Calu3 (cell line): ENCODE measurements at regions of chr13 and their contacts with region 1.

Region 1: DNA sequence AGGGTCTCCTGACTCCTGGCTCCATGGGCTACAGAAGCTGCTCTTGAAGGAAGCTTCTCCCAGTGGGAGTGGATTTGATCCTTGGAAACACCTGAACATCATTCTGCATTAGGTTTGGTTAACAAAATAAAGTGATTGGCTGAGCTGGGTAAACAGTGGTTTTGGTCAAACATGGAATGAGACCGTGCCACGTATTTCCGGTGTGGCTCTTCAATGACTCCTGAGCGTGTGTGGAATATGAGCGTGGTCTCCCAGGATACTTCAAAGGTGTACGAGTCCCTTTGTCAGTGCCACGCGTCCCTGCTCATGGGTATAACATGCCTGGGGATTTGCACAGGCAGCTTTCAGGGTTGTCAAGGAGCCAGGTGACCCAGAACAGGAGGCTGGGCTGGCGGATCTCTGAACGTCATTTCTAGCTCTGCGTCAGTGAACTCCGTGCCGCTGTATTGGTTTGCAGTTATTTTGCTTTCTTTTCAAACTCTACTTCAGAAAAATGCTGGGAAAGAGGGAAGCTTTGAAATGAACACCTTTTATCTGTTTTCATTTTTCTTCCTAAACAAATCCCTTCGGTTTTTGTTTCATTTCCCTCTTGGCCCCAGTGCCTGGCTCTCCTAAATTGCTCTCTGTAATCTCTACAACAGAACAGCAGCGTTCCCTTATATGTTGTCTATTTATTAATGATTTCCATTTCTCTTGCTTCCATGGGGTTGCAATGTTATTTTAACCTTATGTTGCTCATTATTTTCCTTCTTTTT is 26.3 kb upstream of the GJB6 start:
- DNase-seq: no peak
- H3K4me3 Mint-ChIP-seq: no peak overlapping the region
- H3K27ac Mint-ChIP-seq: no peak overlapping the region
- H3K4me1 Mint-ChIP-seq: peaks cover under 1% of the 10 kb centered on the region
- H3K27me3 Mint-ChIP-seq: peaks cover 25% of the 10 kb centered on the region
- CTCF ChIP-seq: no peak

Region 2: DNA sequence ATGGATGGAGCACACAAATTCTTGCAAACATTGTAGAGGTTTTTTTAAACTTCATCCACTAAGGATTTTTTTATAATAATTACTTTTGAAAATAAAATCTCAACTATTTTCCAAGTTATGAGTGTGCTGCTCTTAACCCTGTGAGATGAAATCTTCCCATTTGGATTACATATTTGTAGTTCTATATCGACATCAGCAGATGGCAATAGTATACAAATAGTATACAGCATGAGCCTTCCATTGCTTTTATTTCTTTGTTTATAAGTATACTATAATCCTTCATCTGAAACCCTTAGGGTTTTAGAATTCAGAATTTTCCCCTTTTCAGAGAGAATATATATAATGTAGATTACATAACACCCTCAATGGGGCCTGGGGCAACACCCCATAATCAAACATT is 168.0 kb before region 1 on chr13:
- CTCF ChIA-PET with region 1: no interaction called
- intact Hi-C with region 1: no loop called
- DNase-seq: no peak
- H3K4me3 Mint-ChIP-seq: no peak overlapping the region
- H3K27ac Mint-ChIP-seq: no peak overlapping the region
- H3K4me1 Mint-ChIP-seq: no peaks in the 10 kb centered on the region
- H3K27me3 Mint-ChIP-seq: no peaks in the 10 kb centered on the region
- CTCF ChIP-seq: no peak

Region 3: GRCh38 chr13:20174656-20175405 is 83.6 kb before region 1 on chr13:
- CTCF ChIA-PET with region 1: no interaction called
- intact Hi-C with region 1: no loop called
- DNase-seq: peak; percentile 86
- H3K4me3 Mint-ChIP-seq: peak overlapping the region; percentile 33
- H3K27ac Mint-ChIP-seq: peak overlapping the region; percentile 70
- H3K4me1 Mint-ChIP-seq: peaks cover 19% of the 10 kb centered on the region
- H3K27me3 Mint-ChIP-seq: no peaks in the 10 kb centered on the region
- CTCF ChIP-seq: no peak

Region 4: GRCh38 chr13:20482275-20482761 is 223.9 kb after region 1 on chr13:
- CTCF ChIA-PET with region 1: interaction called, 11 read pairs
- intact Hi-C with region 1: no loop called
- DNase-seq: peak; percentile 22
- H3K4me3 Mint-ChIP-seq: peak overlapping the region; percentile 50
- H3K27ac Mint-ChIP-seq: peak overlapping the region; percentile 12
- H3K4me1 Mint-ChIP-seq: peaks cover 7% of the 10 kb centered on the region
- H3K27me3 Mint-ChIP-seq: no peaks in the 10 kb centered on the region
- CTCF ChIP-seq: no peak

Region 5: DNA sequence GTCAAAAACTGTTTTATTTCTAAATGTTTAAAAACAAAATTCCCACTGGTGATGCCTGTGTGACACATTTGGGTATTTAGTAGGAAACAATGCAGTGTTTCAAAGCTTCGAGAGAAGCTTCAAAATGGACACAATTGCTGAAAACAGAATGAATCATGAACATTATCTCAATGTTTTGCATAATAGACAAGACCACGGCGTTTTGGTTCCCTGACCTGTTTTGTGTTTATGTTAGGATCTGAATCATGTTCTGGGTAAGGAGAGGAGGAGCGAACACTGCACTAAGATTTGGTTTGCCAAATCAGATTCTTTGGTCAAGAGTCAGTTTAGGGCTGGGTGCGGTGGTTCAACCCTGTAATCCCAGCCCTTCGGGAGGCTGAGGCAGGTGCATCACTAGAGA is 350.8 kb after region 1 on chr13:
- CTCF ChIA-PET with region 1: no interaction called
- intact Hi-C with region 1: no loop called
- DNase-seq: no peak
- H3K4me3 Mint-ChIP-seq: no peak overlapping the region
- H3K27ac Mint-ChIP-seq: no peak overlapping the region
- H3K4me1 Mint-ChIP-seq: no peaks in the 10 kb centered on the region
- H3K27me3 Mint-ChIP-seq: no peaks in the 10 kb centered on the region
- CTCF ChIP-seq: no peak